ENCODE measurements at regions of chr16 and their contacts with region 1.

Region 1: GRCh38 chr16:56317998-56318826 is 107.1 kb downstream of the AMFR start:
- DNase-seq: peak; percentile 91
- H3K4me3 ChIP-seq: no peak overlapping the region
- H3K27ac ChIP-seq: peak overlapping the region in 1 of 2 donors; percentile 21
- H3K4me1 ChIP-seq: peaks cover 10% of the 10 kb centered on the region
- H3K27me3 ChIP-seq: no peaks in the 10 kb centered on the region
- CTCF ChIP-seq: peak; percentile 93 to 97 (median 96)
- POLR2A ChIP-seq: no peak

Region 2: GRCh38 chr16:55944377-55944802 is 373.8 kb before region 1 on chr16:
- intact Hi-C with region 1: loop called (anchors 5 kb)
- DNase-seq: peak; percentile 87
- H3K4me3 ChIP-seq: no peak overlapping the region
- H3K27ac ChIP-seq: peak overlapping the region in 1 of 2 donors; percentile 12
- H3K4me1 ChIP-seq: no peaks in the 10 kb centered on the region
- H3K27me3 ChIP-seq: no peaks in the 10 kb centered on the region
- CTCF ChIP-seq: peak; percentile 87 to 95 (median 92)
- POLR2A ChIP-seq: no peak